ENCODE measurements at regions of chr11 and their contacts with region 1.

Region 1: DNA sequence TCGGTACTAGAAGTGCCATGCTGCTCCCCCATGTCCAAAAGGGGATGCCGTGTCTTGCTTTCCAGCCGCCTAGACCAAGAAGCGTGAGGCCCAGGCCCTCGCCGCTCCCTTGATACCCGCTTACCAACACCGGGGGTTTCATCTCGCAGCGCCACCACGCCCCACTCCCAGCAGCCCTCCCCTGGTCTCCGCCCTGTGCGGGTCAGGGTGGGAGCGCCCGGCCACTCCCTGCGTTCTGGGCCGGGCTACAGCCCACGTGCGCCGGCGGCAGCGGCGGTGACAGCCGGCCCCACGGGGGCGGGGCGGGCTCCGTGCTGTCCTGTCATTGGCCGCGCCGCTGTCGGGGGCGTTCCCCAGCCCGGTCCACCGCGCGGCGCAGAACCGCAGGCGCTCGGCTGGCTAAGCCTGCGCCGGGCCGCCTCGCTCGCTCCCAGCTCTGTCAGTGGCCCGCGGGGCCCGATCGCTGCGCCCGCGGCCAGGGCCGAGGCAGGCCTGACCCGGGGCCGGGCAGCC is at the start of gene MICAL2:
- DNase-seq: peak; percentile 97
- H3K4me3 Mint-ChIP-seq: peak within 1 kb of the TSS; percentile 89
- H3K27ac Mint-ChIP-seq: peak within 1 kb of the TSS; percentile 99
- H3K4me1 Mint-ChIP-seq: peaks cover 57% of the 10 kb centered on the region
- H3K27me3 Mint-ChIP-seq: no peaks in the 10 kb centered on the region
- total RNA-seq, gene MICAL2: 501 and 510 TPM in 2 replicates

Region 2: DNA sequence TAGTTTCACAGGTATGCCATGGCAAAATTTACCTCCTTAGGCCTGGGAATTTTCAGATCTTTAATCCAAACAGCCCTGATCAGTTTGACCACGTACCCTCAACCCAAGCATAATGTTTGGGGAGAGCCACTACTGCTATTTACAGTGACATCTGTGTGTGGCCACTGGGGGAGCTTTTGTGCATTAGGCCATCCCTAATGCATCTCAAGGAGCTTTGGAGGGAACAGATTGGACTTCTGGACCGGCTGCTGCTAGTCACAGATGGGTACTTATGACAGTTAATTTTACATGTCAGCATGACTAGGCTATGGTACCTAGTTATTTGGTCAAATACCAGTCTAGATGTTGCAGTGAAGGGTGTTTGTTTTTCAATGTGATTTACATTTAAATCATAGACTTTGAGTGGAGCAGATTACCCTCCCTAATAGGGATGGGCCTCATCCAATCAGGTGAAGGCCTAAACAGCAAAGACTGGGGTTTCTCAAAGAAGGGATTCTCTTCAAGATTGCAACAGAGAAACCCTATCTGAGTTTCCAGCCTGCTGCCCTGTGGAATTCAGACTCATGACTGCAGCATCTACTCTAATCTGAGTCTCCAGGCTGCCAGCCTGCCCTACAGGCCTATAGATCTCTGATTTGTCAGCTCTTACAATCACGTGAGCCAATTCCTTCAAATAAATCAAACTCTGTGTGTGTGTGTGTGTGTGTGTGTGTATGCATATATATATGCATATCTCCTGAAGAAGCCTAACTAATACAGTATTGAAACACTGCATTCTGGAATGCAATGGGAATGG is 450.5 kb before region 1 on chr11:
- intact Hi-C with region 1: no loop called
- DNase-seq: no peak
- H3K4me3 Mint-ChIP-seq: no peak overlapping the region
- H3K27ac Mint-ChIP-seq: no peak overlapping the region
- H3K4me1 Mint-ChIP-seq: no peaks in the 10 kb centered on the region
- H3K27me3 Mint-ChIP-seq: peaks cover 25% of the 10 kb centered on the region

Region 3: DNA sequence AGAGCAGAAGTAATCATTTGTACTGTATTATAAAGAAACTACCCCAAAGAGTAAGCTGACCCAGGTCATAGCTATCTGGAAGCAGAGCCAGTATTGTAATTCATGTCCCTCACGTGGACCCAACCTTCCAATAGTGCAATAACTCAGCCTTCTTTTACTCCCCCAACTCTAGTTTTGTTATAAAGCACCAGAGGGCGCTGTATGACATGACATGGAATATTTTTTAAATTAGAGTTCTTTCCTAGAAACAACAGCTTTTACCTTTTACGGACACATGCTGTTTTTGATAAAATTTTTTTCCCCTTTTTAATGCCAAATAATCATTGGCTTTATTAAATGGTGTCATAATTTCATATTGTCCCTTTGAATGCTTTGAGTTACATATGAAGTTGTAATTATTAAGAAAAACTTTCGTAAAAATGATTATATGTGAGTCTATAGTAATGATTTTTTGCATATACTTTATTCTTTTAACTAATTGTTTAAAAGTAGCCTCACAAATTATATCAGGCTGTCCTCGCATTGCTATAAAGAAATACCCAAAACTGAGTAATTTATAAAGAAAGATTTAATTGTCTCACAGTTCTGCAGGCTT is 178.7 kb before region 1 on chr11:
- intact Hi-C with region 1: no loop called
- DNase-seq: peak; percentile 68
- H3K4me3 Mint-ChIP-seq: no peak overlapping the region
- H3K27ac Mint-ChIP-seq: no peak overlapping the region
- H3K4me1 Mint-ChIP-seq: peaks cover 2% of the 10 kb centered on the region
- H3K27me3 Mint-ChIP-seq: no peaks in the 10 kb centered on the region

Region 4: GRCh38 chr11:12043959-12044819 is 66.1 kb before region 1 on chr11:
- intact Hi-C with region 1: loop called (anchors 5 kb)
- DNase-seq: peak; percentile 90
- H3K4me3 Mint-ChIP-seq: no peak overlapping the region
- H3K27ac Mint-ChIP-seq: peak overlapping the region; percentile 2
- H3K4me1 Mint-ChIP-seq: peaks cover 19% of the 10 kb centered on the region
- H3K27me3 Mint-ChIP-seq: peaks cover 16% of the 10 kb centered on the region

Region 5: GRCh38 chr11:12087075-12088004 is 22.9 kb before region 1 on chr11:
- intact Hi-C with region 1: loop called (anchors 2 kb)
- DNase-seq: peak; percentile 88
- H3K4me3 Mint-ChIP-seq: peak overlapping the region; percentile 40
- H3K27ac Mint-ChIP-seq: peak overlapping the region; percentile 75
- H3K4me1 Mint-ChIP-seq: peaks cover 61% of the 10 kb centered on the region
- H3K27me3 Mint-ChIP-seq: no peaks in the 10 kb centered on the region

Region 6: GRCh38 chr11:12137938-12138731 is 27.9 kb after region 1 on chr11:
- intact Hi-C with region 1: loop called (anchors 2 kb)
- DNase-seq: no peak
- H3K4me3 Mint-ChIP-seq: no peak overlapping the region
- H3K27ac Mint-ChIP-seq: peak overlapping the region; percentile 90
- H3K4me1 Mint-ChIP-seq: peaks cover 66% of the 10 kb centered on the region
- H3K27me3 Mint-ChIP-seq: no peaks in the 10 kb centered on the region

Region 7: DNA sequence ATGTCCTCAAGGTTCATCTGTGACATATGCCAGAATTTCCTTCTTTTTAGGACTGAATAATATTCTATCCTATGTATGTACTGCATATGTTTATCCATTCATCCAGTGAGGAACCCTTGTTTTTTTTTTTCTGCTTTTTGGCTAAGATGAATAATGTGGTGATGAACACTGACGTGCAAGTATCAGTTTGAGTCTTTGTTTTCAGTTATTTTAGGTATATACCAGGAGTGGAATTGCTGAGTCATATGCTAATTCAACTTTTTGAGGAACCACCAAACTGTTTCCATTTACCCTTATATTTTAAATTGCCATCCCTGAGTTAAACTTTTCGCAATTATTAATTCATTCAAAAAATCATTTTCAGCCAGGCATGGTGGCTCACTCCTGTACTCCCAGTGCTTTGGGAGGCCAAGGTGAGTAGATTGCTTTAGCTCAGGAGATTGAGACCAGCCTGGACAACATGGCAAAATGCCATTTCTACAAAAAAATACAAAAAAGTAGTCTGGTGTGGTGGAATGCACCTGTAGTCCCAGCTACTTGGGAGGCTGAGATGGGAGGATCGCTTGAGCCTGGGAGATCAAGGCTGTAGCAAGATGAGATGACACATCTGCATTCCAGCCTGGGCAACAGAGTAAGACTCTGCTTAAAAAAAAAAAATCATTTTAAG is 64.4 kb after region 1 on chr11:
- intact Hi-C with region 1: loop called (anchors 1 kb)
- DNase-seq: peak; percentile 74
- H3K4me3 Mint-ChIP-seq: peak overlapping the region; percentile 78
- H3K27ac Mint-ChIP-seq: peak overlapping the region; percentile 94
- H3K4me1 Mint-ChIP-seq: peaks cover 71% of the 10 kb centered on the region
- H3K27me3 Mint-ChIP-seq: no peaks in the 10 kb centered on the region

Region 8: GRCh38 chr11:12195768-12196167 is 85.5 kb after region 1 on chr11:
- intact Hi-C with region 1: loop called (anchors 5 kb)
- DNase-seq: peak; percentile 90
- H3K4me3 Mint-ChIP-seq: peak overlapping the region; percentile 94
- H3K27ac Mint-ChIP-seq: peak overlapping the region; percentile 96
- H3K4me1 Mint-ChIP-seq: peaks cover 70% of the 10 kb centered on the region
- H3K27me3 Mint-ChIP-seq: no peaks in the 10 kb centered on the region

Region 9: DNA sequence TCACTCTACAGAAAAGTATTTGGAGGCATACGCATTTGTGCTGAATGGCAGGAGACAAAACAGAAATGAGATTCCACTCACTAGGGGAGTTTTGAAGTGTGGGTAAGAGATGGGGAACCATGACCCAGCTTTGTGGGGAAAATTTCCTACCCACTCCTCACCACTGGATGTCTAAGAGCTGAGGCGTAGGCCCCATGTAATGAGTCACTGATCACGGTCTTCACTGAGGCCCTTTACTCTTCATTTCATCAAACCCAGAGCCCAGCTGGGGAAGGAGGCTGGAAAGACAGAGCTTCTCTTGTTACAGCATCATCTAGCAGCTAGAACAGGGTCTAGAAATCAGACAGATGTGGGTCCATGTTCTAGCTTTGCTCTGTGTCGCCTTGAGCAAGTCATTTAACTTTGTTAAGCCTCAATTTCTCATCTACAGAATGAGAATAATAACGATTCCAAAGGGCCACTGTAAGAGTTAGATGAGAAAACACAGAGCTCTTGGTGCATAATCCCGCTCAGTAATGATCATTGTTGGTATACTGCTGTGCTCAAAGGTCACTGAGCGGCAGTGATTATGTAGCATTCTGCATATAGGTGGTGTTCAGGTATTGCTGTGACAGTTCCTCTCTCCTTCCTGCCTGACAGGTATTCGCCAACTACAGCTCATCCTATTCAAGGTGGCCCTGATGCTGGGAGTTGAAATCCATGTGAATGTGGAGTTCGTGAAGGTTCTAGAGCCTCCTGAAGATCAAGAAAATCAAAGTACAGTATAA is 97.3 kb after region 1 on chr11:
- intact Hi-C with region 1: loop called (anchors 1 kb)
- DNase-seq: peak; percentile 68
- H3K4me3 Mint-ChIP-seq: peak overlapping the region; percentile 68
- H3K27ac Mint-ChIP-seq: peak overlapping the region; percentile 95
- H3K4me1 Mint-ChIP-seq: peaks cover 68% of the 10 kb centered on the region
- H3K27me3 Mint-ChIP-seq: no peaks in the 10 kb centered on the region

Measured in activated CD4-positive, alpha-beta T cell treated with anti-CD3 and anti-CD28 coated beads, Interleukin-2, amount 10 ng/mL, durations not matched to agents 24 days and 14 days (primary cell).